Ovary (tissue), 10 donors: ENCODE measurements at regions of chr3 and their contacts with region 1.

Region 1: DNA sequence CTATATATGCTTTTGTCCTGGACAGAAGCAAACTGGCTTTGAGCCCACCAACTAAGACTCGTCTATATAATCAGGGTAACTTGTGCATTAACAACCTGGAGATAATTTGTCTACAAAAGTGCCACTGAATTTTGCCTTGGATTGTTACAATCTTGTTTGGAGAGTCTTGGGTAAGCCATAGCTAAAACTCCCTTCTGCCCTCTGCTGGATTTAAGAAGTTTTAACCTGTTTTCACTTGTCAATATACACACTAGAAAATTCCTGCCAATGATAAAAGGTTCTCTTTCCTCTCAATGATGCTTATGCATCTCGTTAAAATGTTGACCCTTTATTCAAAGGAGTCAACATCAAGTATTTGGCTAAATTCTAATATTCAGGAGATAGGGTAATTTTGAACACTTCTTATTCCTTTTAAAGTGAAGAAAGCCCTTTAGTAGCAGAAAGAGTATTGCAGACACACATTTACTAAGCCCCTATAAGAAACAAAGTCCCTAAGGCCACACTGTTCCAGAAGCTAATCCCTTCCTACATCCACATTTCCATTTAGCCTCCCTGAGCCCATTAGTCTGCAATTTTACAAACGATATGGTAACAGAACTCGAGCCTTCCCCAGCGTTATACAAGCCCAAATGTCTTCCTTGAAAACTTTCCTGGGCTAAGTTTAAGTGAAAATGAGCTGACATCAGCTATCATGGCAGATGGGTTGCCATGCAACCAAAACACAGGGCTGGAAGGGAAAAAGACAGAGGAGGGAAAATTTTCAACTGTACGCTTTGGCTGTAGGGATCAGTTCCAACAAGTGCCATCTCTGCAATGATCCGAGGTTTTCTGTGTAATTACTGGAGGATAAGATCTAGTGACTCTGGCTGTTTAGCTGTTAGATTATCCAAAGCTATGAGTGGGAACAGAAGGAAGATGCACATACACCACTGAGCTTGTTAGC is 75.9 kb upstream of the FGF12 start:
- DNase-seq: no peak
- H3K4me3 ChIP-seq: no peak overlapping the region
- H3K27ac ChIP-seq: no peak overlapping the region
- H3K4me1 ChIP-seq: no peaks in the 10 kb centered on the region
- H3K27me3 ChIP-seq: no peaks in the 10 kb centered on the region
- CTCF ChIP-seq: peak in 2 of 3 donors; percentile 11 to 18
- EP300 ChIP-seq: no peak
- POLR2A ChIP-seq: no peak

Region 2: GRCh38 chr3:192577271-192577670 is 226.0 kb before region 1 on chr3:
- intact Hi-C with region 1: no loop called
- DNase-seq: no peak
- H3K4me3 ChIP-seq: no peak overlapping the region
- H3K27ac ChIP-seq: no peak overlapping the region
- H3K4me1 ChIP-seq: no peaks in the 10 kb centered on the region
- H3K27me3 ChIP-seq: no peaks in the 10 kb centered on the region
- CTCF ChIP-seq: no peak
- EP300 ChIP-seq: no peak
- POLR2A ChIP-seq: no peak

Region 3: GRCh38 chr3:192778508-192778907 is 24.7 kb before region 1 on chr3:
- intact Hi-C with region 1: loop called in 1 of 4 experiments (anchors 1 kb)
- DNase-seq: no peak
- H3K4me3 ChIP-seq: no peak overlapping the region
- H3K27ac ChIP-seq: no peak overlapping the region
- H3K4me1 ChIP-seq: no peaks in the 10 kb centered on the region
- H3K27me3 ChIP-seq: no peaks in the 10 kb centered on the region
- CTCF ChIP-seq: no peak
- EP300 ChIP-seq: no peak
- POLR2A ChIP-seq: no peak

Region 4: GRCh38 chr3:193240850-193241706 is 437.9 kb after region 1 on chr3 and contains the start of gene PLAAT1:
- intact Hi-C with region 1: loop called in 1 of 4 experiments (anchors 10 kb)
- DNase-seq: peak; percentile 14 to 70 (median 33)
- H3K4me3 ChIP-seq: peak within 1 kb of the TSS; percentile 24
- H3K27ac ChIP-seq: no peak within 1 kb of the TSS
- H3K4me1 ChIP-seq: no peaks in the 10 kb centered on the region
- H3K27me3 ChIP-seq: no peaks in the 10 kb centered on the region
- CTCF ChIP-seq: no peak
- EP300 ChIP-seq: no peak
- POLR2A ChIP-seq: no peak
- total RNA-seq, gene PLAAT1: 0.54 to 1.8 (median 0.72) TPM in 5 of 7 donors, not detected in the others